ENCODE measurements at regions of chr4 and their contacts with region 1.

Region 1: DNA sequence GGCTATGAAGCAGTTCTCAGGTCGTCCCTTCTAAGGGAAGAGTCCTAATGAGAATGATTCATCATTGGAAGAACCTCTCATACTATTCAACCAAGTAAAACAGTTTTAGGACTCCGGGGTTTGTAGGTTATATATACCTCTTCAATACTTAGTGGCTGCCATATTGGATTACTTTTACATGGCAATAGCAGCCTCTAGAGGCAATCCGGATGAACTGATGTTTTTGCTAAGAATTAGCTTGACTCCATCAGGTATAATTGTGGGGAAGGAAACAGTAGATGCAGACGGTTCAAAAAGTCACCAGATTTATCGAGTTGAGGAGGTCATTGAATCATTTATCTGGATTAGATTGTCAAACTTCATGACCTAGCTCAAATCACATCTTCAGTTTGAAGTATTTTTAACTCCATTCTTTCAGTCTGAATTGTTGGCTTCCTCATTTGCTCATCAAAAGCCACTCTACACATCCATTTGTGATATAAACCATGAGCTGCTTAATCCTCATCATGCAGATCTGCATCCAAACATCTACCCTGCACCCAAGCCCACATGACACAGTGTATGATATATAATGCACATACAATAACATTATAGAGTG is 28.4 kb downstream of the GUCY1B1 start:
- DNase-seq: peak; percentile 63
- CTCF ChIP-seq: peak; percentile 84

Region 2: DNA sequence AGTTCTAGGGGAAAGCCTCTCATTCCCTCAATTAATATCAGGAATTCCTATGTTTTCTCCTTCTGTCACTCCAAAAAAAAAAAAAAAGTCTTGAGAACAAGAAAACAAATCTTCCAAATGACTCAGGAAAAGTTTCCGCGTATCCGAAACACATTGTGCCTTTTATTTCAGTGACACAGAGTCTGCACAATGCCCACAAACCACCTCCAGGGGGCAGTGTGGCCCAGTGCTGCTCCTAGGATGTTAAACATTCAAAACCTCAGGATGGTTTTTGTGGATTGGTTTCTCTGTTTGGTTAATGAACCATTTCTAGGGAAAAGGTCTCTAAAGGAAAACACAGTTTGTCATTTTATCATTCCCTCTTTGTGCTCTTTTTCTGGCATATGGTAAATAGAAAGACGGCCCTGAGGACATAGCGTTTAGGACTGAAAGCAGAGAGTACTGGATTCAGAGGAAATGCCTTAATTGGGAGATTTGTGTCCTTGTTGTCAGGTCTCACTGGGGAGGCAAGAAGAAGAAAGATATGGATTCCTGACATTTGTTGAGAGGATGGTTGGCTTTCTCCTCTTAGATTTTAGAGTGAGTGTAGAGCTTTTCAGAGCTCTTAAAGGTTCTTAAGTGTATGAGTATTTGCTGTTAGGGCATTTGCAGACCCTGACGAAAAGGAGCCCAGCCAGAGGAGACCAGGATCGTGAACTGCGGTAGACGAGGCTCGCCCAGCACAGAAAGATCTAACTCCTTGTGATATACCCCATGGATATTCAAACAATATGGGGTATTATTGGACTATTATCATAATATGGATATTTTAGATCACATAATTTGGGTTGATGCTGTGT is 344.7 kb before region 1 on chr4:
- in situ Hi-C with region 1: loop called (anchors 25 kb)
- DNase-seq: peak; percentile 36
- CTCF ChIP-seq: peak; percentile 91

Region 3: GRCh38 chr4:155552180-155552579 is 235.0 kb before region 1 on chr4:
- in situ Hi-C with region 1: no loop called
- DNase-seq: no peak
- CTCF ChIP-seq: no peak

Region 4: GRCh38 chr4:156293657-156294297 is 506.6 kb after region 1 on chr4:
- in situ Hi-C with region 1: no loop called
- DNase-seq: no peak
- CTCF ChIP-seq: no peak

Measured in GM13977 (cell line).